ENCODE measurements at regions of chr9 and their contacts with region 1.

Region 1: DNA sequence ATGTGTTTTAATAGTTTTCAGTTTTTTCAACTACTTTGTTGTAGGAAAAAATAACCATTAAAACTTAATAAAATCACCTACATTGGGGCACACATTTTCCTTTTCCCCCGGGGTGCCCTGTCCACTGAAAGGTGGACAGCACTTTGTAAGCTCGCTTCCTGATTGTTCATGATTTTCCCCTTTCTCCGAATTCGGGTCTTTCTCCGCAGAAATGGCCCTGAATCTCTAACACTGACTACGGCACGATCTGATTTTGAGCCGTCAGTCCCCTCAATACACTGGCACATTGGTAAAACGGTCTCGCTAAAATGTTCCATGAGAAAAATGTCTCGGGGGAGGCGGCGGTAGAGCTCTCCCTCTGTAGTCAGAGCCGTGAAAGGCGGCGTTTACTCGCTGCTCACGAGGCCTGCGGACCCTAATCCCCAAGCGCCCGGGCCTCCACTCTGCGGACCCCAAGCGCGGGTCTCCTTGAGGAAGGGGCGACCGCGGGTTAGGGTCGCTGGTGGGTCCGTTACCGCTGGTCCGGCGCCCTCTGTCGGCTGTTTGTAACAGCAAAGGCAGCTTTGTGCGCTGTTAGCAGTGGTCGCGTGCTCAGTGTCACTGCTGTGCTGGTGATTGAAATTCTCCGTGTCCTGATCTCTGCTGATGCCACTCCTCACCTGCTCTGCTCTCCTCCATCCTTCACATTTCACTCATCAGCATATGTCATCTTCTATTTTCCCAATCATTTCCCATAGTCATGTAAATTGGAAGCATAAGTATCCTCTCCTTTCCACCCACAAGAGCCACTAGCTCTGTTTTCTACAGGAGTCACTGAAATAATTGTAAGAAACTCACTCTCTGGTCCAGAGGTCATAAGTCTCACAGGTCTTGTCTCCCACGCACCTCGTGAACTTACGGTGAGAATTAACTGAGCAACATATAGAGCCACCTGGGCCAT is 10.8 kb upstream of the IFNA2 start:
- DNase-seq: peak; percentile 86
- H3K4me3 Mint-ChIP-seq: peak overlapping the region; percentile 45
- H3K27ac Mint-ChIP-seq: no peak overlapping the region
- H3K4me1 Mint-ChIP-seq: peaks cover 4% of the 10 kb centered on the region
- H3K27me3 Mint-ChIP-seq: peaks cover 74% of the 10 kb centered on the region

Region 2: GRCh38 chr9:21239911-21240310 is 156.1 kb before region 1 on chr9 and contains the start of gene IFNA14:
- intact Hi-C with region 1: loop called (anchors 10 kb)
- DNase-seq: no peak
- H3K4me3 Mint-ChIP-seq: no peak within 1 kb of the TSS
- H3K27ac Mint-ChIP-seq: no peak within 1 kb of the TSS
- H3K4me1 Mint-ChIP-seq: peaks cover 4% of the 10 kb centered on the region
- H3K27me3 Mint-ChIP-seq: peaks cover 37% of the 10 kb centered on the region
- total RNA-seq, gene IFNA14: not detected in 2 replicates

Region 3: GRCh38 chr9:21513431-21513830 is 117.4 kb after region 1 on chr9:
- intact Hi-C with region 1: no loop called
- DNase-seq: no peak
- H3K4me3 Mint-ChIP-seq: no peak overlapping the region
- H3K27ac Mint-ChIP-seq: no peak overlapping the region
- H3K4me1 Mint-ChIP-seq: no peaks in the 10 kb centered on the region
- H3K27me3 Mint-ChIP-seq: peaks cover 2% of the 10 kb centered on the region

Region 4: DNA sequence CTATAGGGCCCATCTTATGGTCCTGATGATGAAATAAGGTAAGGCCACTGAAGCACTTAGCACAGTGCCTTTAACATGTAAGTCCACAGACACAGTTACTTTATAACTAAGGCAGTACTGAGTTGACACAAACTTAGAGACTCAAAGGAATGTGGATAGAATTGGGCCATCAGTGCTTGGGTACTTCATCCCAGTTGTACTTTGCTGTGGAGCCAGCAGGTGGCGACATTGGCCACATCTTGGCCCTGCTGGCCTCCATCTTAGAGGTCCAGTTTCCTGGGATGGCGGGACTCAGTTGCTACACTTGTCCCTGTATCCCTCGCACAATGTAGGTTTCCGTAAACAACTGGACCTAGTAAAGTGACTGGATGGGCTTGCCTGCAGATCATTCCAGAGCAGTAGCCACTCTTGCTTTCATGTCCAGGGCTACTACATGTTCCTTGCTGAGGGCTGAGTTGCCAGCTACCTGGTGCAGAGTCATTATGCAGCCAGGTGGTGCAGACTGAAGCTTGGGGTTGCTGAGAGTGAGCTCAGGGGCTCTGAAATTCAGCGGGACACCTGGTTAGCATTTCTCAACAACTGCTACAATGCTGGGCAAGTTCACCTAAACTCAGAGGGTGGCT is 417.0 kb after region 1 on chr9:
- intact Hi-C with region 1: no loop called
- DNase-seq: peak; percentile 90
- H3K4me3 Mint-ChIP-seq: no peak overlapping the region
- H3K27ac Mint-ChIP-seq: no peak overlapping the region
- H3K4me1 Mint-ChIP-seq: peaks cover 25% of the 10 kb centered on the region
- H3K27me3 Mint-ChIP-seq: no peaks in the 10 kb centered on the region

Measured in activated CD4-positive, alpha-beta T cell treated with anti-CD3 and anti-CD28 coated beads, Interleukin-2, amount 10 ng/mL, durations not matched to agents 24 days and 14 days (primary cell).